Astrocyte of the cerebellum (primary cell): ENCODE measurements at regions of chr6 and their contacts with region 1.

Region 1: GRCh38 chr6:12923644-12924235 is 207.2 kb downstream of the PHACTR1 start:
- DNase-seq: no peak
- H3K4me3 ChIP-seq: no peak overlapping the region
- CTCF ChIP-seq: no peak

Region 2: DNA sequence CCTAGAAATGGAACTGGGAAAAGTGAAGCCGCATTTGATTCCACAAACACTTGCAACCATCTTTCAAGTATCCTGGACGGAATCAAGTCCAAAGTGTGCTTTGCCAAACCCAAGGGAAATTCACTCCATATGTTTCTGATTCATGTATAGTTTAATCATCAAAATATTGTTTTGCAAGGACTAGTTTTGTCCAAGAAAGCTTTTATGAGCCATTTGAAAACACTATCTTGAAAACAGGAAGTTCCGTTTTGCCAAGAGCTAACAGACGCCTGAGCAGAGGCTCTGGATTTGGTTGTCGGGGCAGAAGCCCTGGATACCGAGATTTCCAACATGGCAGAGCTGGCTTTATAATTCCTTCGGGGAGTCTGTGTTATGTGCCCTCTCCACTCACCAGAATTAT is 43.9 kb after region 1 on chr6:
- in situ Hi-C with region 1: no loop called
- DNase-seq: no peak
- H3K4me3 ChIP-seq: no peak overlapping the region
- CTCF ChIP-seq: no peak

Region 3: GRCh38 chr6:13336553-13336952 is 412.8 kb after region 1 on chr6:
- in situ Hi-C with region 1: loop called (anchors 10 kb)
- DNase-seq: peak; percentile 93
- H3K4me3 ChIP-seq: no peak overlapping the region
- CTCF ChIP-seq: peak; percentile 90